ENCODE measurements at regions of chr3 and their contacts with region 1.

Region 1: GRCh38 chr3:43769471-43770425 is 79.0 kb downstream of the ABHD5 start:
- DNase-seq: peak; percentile 73
- ATAC-seq: peak; percentile 65
- H3K4me3 Mint-ChIP-seq: no peak overlapping the region
- H3K27ac Mint-ChIP-seq: no peak overlapping the region
- H3K4me1 Mint-ChIP-seq: peaks cover 3% of the 10 kb centered on the region
- H3K27me3 Mint-ChIP-seq: peaks cover 26% of the 10 kb centered on the region

Region 2: DNA sequence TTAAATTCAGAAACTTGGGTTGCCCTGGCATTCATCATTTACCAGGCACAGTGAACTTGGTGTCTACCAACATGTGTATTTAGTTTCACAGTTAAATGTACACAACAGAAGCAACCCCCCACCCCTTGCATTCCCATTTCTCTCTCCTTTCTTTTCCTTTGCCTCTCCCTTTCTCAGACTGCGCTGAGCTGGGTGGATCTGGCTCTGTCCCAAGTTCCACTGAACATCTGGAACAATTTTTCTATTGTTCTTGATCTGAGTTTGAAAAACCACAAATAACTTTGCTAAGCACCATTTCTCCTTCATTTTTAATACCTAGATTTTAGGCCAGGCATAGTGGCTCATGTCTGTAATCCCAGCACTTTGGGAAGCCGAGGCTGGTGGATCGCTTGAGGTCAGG is 163.2 kb after region 1 on chr3:
- CTCF ChIA-PET with region 1: no interaction called
- DNase-seq: no peak
- ATAC-seq: no peak
- H3K4me3 Mint-ChIP-seq: no peak overlapping the region
- H3K27ac Mint-ChIP-seq: no peak overlapping the region
- H3K4me1 Mint-ChIP-seq: no peaks in the 10 kb centered on the region
- H3K27me3 Mint-ChIP-seq: peaks cover 19% of the 10 kb centered on the region

Region 3: GRCh38 chr3:44198284-44199269 is 428.8 kb after region 1 on chr3:
- CTCF ChIA-PET with region 1: interaction called, 11 read pairs
- DNase-seq: peak; percentile 75
- ATAC-seq: peak; percentile 80
- H3K4me3 Mint-ChIP-seq: no peak overlapping the region
- H3K27ac Mint-ChIP-seq: no peak overlapping the region
- H3K4me1 Mint-ChIP-seq: no peaks in the 10 kb centered on the region
- H3K27me3 Mint-ChIP-seq: peaks cover 21% of the 10 kb centered on the region

Measured in activated CD8-positive, alpha-beta memory T cell treated with anti-CD3 and anti-CD28 coated beads, Interleukin-2, amount 10 ng/mL, durations not matched to agents 7 days and 5 days (primary cell).